Mammary epithelial cell (primary cell): ENCODE measurements at regions of chr10 and their contacts with region 1.

Region 1: GRCh38 chr10:100481462-100482081 is 18.8 kb downstream of the WNT8B start:
- DNase-seq: peak; percentile 82
- H3K4me3 ChIP-seq: peak overlapping the region; percentile 12 to 47 (median 40)
- H3K27ac ChIP-seq: no peak overlapping the region
- H3K4me1 ChIP-seq: peaks cover 8% of the 10 kb centered on the region
- H3K27me3 ChIP-seq: no peaks in the 10 kb centered on the region
- CTCF ChIP-seq: no peak

Region 2: GRCh38 chr10:99854860-99855259 is 626.7 kb before region 1 on chr10:
- CTCF ChIA-PET with region 1: no interaction called
- dilution Hi-C with region 1: loop called (anchors 25 kb)
- in situ Hi-C with region 1: no loop called
- intact Hi-C with region 1: no loop called
- DNase-seq: no peak
- H3K4me3 ChIP-seq: no peak overlapping the region
- H3K27ac ChIP-seq: no peak overlapping the region
- H3K4me1 ChIP-seq: no peaks in the 10 kb centered on the region
- H3K27me3 ChIP-seq: no peaks in the 10 kb centered on the region
- CTCF ChIP-seq: peak in 1 of 2 donors; percentile 2

Region 3: GRCh38 chr10:100508691-100509150 is 27.1 kb after region 1 on chr10:
- CTCF ChIA-PET with region 1: no interaction called
- dilution Hi-C with region 1: no loop called
- in situ Hi-C with region 1: no loop called
- intact Hi-C with region 1: loop called (anchors 1 kb)
- DNase-seq: peak; percentile 47
- H3K4me3 ChIP-seq: no peak overlapping the region
- H3K27ac ChIP-seq: no peak overlapping the region
- H3K4me1 ChIP-seq: peaks cover 32% of the 10 kb centered on the region
- H3K27me3 ChIP-seq: no peaks in the 10 kb centered on the region
- CTCF ChIP-seq: peak; percentile 77 to 79

Region 4: GRCh38 chr10:100518761-100519241 is 37.2 kb after region 1 on chr10:
- CTCF ChIA-PET with region 1: interaction called, 18 read pairs
- dilution Hi-C with region 1: no loop called
- in situ Hi-C with region 1: no loop called
- intact Hi-C with region 1: no loop called
- DNase-seq: peak; percentile 63
- H3K4me3 ChIP-seq: no peak overlapping the region
- H3K27ac ChIP-seq: no peak overlapping the region
- H3K4me1 ChIP-seq: peaks cover 35% of the 10 kb centered on the region
- H3K27me3 ChIP-seq: no peaks in the 10 kb centered on the region
- CTCF ChIP-seq: peak; percentile 73 to 81

Region 5: DNA sequence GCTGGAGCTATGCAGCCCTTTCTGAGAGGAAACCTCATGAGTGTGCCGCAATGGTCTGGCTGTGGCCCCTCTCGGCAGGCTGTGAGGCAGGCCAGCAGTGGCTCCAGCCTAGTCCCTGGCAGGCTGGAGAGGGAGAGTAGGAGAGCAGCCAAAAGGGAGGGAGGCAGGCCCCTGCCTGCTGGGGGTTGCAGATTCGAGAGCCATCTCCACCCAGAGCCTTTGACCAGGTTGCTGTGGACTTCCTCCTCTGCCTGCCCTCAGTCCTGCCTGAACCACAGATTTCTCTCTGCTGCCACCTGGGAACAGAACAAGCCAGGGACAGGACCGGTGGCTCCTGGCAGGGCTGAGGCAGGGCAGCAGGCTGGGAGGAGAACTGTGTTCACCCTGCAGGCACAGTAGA is 277.8 kb after region 1 on chr10:
- CTCF ChIA-PET with region 1: no interaction called
- dilution Hi-C with region 1: no loop called
- in situ Hi-C with region 1: no loop called
- intact Hi-C with region 1: no loop called
- DNase-seq: no peak
- H3K4me3 ChIP-seq: no peak overlapping the region
- H3K27ac ChIP-seq: no peak overlapping the region
- H3K4me1 ChIP-seq: no peaks in the 10 kb centered on the region
- H3K27me3 ChIP-seq: peaks cover 9% of the 10 kb centered on the region
- CTCF ChIP-seq: peak in 1 of 2 donors; percentile 4